HEK293T (cell line): ENCODE measurements at regions of chr10 and their contacts with region 1.

Region 1: DNA sequence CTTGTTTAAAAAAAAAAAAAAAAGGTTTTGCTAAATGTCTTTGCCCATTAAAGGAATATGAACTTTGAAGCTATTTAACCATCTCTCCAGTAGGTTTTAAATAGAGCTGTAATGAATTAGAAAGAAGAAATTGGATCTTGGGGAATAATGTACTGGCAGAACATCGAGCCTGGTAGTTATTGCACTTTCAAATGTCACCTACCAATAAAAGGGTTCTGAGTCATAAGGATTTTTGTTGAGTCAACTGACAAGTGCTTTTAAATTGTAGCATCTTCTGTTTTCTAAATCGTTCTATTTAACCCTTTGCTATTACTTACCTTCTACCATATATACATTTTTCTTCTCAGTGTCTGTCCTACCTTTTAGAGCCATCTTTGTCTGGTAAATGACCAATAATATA is 10.7 kb downstream of the CUTC start:
- DNase-seq: no peak

Region 2: DNA sequence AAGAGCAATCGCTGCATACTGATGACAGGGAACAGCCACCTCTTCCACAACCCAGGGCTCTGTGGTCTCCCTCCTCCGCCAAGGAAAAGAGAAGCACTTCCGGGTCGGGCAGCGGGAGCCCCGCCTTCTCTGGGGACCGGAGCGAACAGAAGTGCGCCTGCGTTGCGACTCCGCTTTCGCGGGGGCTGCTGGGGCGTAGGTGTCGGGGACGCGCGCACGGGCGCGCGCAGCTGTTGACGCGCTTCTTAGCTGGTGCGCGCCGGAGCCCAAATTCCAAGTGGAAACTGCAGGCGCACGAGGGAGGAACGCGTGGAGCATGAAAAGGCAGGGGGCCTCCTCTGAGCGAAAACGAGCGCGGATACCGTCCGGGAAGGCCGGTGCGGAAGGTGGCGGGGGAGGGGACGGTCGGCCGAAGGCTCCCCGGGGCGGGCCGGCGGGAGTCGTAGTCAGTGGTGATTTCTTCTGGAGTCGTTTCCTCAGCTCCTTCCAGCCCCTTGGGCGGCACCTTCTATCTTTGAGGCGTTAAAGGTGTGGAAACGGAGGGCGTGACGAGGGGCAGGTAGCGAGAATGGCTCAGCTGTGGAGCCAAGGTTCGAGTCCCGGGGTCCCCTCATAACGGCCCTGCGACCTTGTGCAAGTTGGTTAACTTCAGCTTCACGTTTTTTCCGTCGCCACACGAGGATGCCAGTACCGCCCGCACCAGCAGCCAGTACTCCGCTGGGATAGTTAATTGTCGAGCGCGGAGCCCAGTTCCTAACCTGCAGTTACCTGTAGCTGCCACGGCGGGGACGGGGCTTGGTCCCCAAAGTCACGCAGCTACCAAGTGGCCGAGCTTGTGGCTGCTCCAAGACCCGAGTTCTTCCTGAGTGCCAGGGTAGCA is 10.4 kb before region 1 on chr10 and contains the starts of genes COX15 and CUTC:
- CTCF ChIA-PET with region 1: interaction called, 4 read pairs
- POLR2A ChIA-PET with region 1: interaction called, 23 read pairs
- DNase-seq: peak; percentile 99